ENCODE measurements at regions of chr5 and their contacts with region 1.

Region 1: DNA sequence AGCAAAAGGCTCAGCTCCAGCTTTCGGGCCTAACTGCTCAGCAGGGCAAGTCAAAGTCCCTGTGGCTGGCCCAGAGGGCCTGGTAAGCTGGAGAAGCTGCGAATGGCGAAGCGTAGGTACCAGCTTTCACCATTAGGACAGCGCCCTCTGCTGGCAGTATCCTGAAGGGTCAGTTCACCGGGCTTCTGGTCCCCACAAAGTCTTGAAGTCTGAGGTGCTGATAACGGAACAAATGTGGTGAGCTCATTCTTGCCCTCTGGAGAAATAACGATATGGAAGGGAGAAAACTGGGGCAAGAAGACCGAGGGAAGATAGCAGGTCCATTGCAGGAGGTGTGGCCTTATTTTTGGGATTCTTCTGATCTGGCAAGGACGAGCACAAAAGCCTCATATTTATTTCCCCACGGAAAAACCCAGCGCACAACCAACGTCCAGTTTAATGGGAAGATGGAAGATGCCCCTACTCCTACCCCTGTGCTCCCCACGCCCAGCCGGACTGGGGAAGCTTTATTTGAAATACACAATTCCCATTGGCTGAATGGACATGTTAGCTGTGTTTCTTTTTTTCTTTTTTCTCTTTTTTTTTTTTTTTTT is 7.2 kb downstream of the SOWAHA start:
- DNase-seq: peak; percentile 88 to 98 (median 94)
- H3K4me3 ChIP-seq: no peak overlapping the region
- H3K27ac ChIP-seq: peak overlapping the region in 1 of 5 donors; percentile 38
- H3K4me1 ChIP-seq: peaks cover 0 to 11% of the 10 kb centered on the region in 2 donors
- H3K27me3 ChIP-seq: no peaks in the 10 kb centered on the region
- CTCF ChIP-seq: peak; percentile 86 to 96 (median 93)
- POLR2A ChIP-seq: no peak

Region 2: GRCh38 chr5:132526290-132526973 is 293.8 kb before region 1 on chr5:
- intact Hi-C with region 1: loop called in 1 of 2 experiments (anchors 5 kb)
- DNase-seq: peak; percentile 27 to 58 (median 37)
- H3K4me3 ChIP-seq: peak overlapping the region in 1 of 4 donors; percentile 4
- H3K27ac ChIP-seq: no peak overlapping the region
- H3K4me1 ChIP-seq: no peaks in the 10 kb centered on the region
- H3K27me3 ChIP-seq: no peaks in the 10 kb centered on the region
- CTCF ChIP-seq: peak; percentile 70 to 93 (median 83)
- POLR2A ChIP-seq: no peak

Region 3: GRCh38 chr5:132854301-132854700 is 34.0 kb after region 1 on chr5:
- intact Hi-C with region 1: no loop called
- DNase-seq: no peak
- H3K4me3 ChIP-seq: no peak overlapping the region
- H3K27ac ChIP-seq: no peak overlapping the region
- H3K4me1 ChIP-seq: no peaks in the 10 kb centered on the region
- H3K27me3 ChIP-seq: no peaks in the 10 kb centered on the region
- CTCF ChIP-seq: no peak
- POLR2A ChIP-seq: no peak

Measured in adrenal gland (tissue), 19 donors.